ENCODE measurements at regions of chr17 and their contacts with region 1.

Region 1: GRCh38 chr17:32519228-32520103 is 32.7 kb downstream of the CDK5R1 start:
- DNase-seq: peak in 9 of 10 donors; percentile 37 to 72 (median 59)
- ATAC-seq: peak; percentile 37 to 59
- H3K4me3 Mint-ChIP-seq: peak overlapping the region; percentile 77 to 89 (median 87)
- H3K27ac Mint-ChIP-seq: peak overlapping the region; percentile 92 to 98 (median 95)
- H3K4me1 Mint-ChIP-seq: peaks cover 45 to 89% (median 85%) of the 10 kb centered on the region in 4 donors
- H3K27me3 Mint-ChIP-seq: no peaks in the 10 kb centered on the region

Region 2: DNA sequence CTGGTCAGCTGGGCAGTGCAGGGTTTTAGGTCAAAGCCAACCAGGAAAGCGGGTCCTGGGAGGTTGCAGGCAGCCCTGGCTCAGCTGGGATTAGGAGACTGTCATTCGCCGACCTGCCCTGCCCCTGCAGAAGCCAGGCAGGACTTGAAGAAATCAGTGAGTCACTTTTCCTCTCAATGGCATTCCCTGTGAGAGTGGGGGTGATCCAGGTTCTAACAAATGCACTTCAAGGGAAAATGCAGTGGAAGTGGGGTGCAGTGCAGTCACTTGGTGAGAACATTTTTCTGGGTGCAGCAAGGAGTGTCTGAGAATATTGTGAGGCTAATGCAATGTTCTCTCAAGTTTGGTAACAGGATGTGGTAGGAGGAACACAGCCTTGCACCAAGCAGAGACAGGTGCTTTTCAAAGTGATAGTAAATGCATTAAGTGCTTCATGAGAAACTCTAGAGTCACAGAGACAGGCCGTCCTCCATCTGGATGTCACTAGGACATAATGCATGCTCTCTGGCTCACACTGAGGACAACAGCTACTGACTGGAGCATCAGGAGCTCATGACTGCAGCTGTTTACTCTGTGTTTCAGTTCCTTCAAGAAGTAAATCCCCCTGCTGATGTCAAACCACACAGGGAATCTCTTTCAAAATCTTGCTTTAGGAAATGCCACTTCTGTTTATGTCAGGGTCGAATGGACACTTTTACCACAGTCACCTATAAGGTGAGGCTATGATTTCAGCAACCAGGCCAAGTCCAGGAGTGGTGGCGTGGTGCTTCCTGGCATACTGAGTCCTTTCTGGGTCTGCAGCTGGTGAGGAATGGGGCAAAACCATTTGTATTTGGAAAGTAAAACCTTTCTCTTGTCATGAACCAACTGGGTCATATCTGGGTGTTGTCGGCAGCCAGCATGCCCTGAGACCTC is 16.0 kb before region 1 on chr17:
- POLR2A ChIA-PET with region 1: interaction called, 889 read pairs
- DNase-seq: peak in 9 of 10 donors; percentile 26 to 80 (median 56)
- ATAC-seq: peak; percentile 93 to 95
- H3K4me3 Mint-ChIP-seq: peak overlapping the region; percentile 43 to 84 (median 70)
- H3K27ac Mint-ChIP-seq: peak overlapping the region; percentile 97 to 100 (median 98)
- H3K4me1 Mint-ChIP-seq: peaks cover 34 to 88% (median 73%) of the 10 kb centered on the region in 4 donors
- H3K27me3 Mint-ChIP-seq: no peaks in the 10 kb centered on the region

Region 3: DNA sequence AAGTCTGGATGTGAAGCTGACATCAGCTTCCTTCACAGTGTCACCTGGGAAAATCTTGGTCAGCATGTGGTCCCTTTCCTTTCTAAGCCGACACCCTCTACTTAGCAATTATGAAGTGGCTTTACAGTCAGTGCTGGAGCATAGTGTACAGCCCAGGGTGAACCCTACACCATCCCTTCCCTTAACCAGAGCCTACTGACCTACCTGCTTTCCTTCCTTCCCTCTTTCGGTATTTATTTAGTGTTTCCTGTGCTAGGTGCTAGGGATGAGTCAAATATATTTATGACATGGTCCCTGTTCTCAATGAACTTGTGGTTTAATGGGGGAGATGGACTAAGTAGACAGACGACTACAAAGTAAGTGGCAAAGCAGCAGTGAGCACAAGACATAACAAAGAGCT is 44.9 kb after region 1 on chr17:
- POLR2A ChIA-PET with region 1: no interaction called
- DNase-seq: no peak
- ATAC-seq: no peak
- H3K4me3 Mint-ChIP-seq: no peak overlapping the region
- H3K27ac Mint-ChIP-seq: no peak overlapping the region
- H3K4me1 Mint-ChIP-seq: peaks cover under 1 to 3% (median 3%) of the 10 kb centered on the region in 4 donors
- H3K27me3 Mint-ChIP-seq: no peaks in the 10 kb centered on the region

Measured in naive thymus-derived CD8-positive, alpha-beta T cell (primary cell).